Activated CD4-positive, alpha-beta T cell treated with anti-CD3 and anti-CD28 coated beads for 36 hours (primary cell): ENCODE measurements at regions of chr2 and their contacts with region 1.

Region 1: DNA sequence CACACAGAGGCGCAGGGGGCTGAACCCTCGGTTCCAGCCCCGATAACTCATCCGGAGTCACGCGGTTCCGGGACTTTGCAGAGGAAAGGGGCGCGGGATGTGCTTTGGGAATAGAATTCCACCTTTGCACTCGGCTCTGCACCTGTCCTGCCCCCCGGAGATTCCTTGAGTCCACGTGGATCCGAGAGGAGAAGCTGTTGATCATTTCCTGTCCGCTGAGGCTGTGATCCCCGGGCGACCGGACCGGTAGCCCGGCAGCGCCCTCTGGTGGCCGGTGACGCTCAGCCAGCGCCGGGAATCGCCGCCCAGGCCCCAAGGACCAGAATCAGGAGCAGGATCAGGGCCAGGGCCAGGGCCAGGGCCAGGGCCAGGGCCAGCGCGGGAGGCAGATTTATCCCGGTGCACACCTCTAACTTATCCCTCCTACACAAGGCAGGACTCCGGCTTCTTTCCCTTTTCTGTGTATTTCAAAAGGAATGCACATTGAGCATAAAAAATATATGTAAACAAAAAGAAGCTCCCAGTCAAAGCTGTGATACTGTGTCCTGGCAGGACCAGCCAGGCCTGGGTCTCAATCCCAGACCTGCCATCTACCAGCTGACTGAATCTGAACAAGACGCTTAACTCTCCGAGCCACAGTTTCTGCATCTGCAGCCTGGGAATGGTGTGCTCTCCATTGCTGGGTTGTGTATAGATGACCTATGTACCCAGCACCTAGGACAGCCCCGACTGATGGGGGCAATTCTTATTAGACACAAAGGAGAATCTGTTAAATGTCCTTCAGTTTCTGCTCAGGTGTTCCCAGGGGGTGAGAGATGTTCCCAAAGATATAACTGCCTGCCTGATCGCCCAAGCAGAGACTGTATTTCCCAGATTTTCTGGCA is 8.5 kb upstream of the SPATA3 start:
- DNase-seq: peak; percentile 88
- ATAC-seq: peak; percentile 34
- H3K4me3 Mint-ChIP-seq: peak overlapping the region; percentile 67
- H3K27ac Mint-ChIP-seq: no peak overlapping the region
- H3K4me1 Mint-ChIP-seq: peaks cover 36% of the 10 kb centered on the region
- H3K27me3 Mint-ChIP-seq: peaks cover 16% of the 10 kb centered on the region

Region 2: DNA sequence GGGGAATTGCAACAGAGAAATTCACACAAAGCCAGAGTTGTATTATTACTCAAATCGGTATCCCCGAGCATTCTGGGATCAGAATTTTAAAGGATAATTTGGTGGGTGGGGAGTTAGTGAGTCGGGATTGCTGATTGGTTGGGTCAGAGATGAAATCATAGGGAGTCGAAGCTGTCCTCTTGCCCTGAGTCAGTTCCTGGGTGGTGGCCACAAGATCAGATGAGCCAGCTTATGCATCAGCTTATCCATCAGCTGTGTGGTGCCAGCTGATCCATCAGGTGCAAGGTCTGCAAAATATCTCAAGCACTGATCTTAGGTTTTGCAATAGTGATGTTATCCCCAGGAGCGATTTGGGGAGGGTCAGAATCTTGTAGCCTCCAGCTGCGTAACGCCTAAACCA is 157.0 kb before region 1 on chr2:
- CTCF ChIA-PET with region 1: interaction called, 12 read pairs
- POLR2A ChIA-PET with region 1: interaction called, 4 read pairs
- intact Hi-C with region 1: no loop called
- DNase-seq: peak; percentile 58
- ATAC-seq: peak; percentile 64
- H3K4me3 Mint-ChIP-seq: no peak overlapping the region
- H3K27ac Mint-ChIP-seq: no peak overlapping the region
- H3K4me1 Mint-ChIP-seq: no peaks in the 10 kb centered on the region
- H3K27me3 Mint-ChIP-seq: peaks cover 38% of the 10 kb centered on the region

Region 3: GRCh38 chr2:230902180-230902899 is 85.0 kb before region 1 on chr2:
- CTCF ChIA-PET with region 1: interaction called, 186 read pairs
- POLR2A ChIA-PET with region 1: interaction called, 16 read pairs
- intact Hi-C with region 1: loop called (anchors 1 kb)
- DNase-seq: peak; percentile 81
- ATAC-seq: peak; percentile 43
- H3K4me3 Mint-ChIP-seq: no peak overlapping the region
- H3K27ac Mint-ChIP-seq: no peak overlapping the region
- H3K4me1 Mint-ChIP-seq: peaks cover 56% of the 10 kb centered on the region
- H3K27me3 Mint-ChIP-seq: peaks cover 12% of the 10 kb centered on the region

Region 4: GRCh38 chr2:230942920-230943896 is 44.2 kb before region 1 on chr2:
- CTCF ChIA-PET with region 1: interaction called, 4 read pairs
- POLR2A ChIA-PET with region 1: no interaction called
- intact Hi-C with region 1: loop called in 1 of 2 experiments (anchors 1 kb)
- DNase-seq: peak; percentile 78
- ATAC-seq: peak; percentile 78
- H3K4me3 Mint-ChIP-seq: peak overlapping the region; percentile 61
- H3K27ac Mint-ChIP-seq: peak overlapping the region; percentile 75
- H3K4me1 Mint-ChIP-seq: peaks cover 27% of the 10 kb centered on the region
- H3K27me3 Mint-ChIP-seq: peaks cover 4% of the 10 kb centered on the region

Region 5: GRCh38 chr2:230974096-230974913 is 13.1 kb before region 1 on chr2:
- CTCF ChIA-PET with region 1: interaction called, 15 read pairs
- POLR2A ChIA-PET with region 1: interaction called, 6 read pairs
- intact Hi-C with region 1: loop called (anchors 1 kb)
- DNase-seq: peak; percentile 86
- ATAC-seq: peak; percentile 92
- H3K4me3 Mint-ChIP-seq: peak overlapping the region; percentile 26
- H3K27ac Mint-ChIP-seq: peak overlapping the region; percentile 91
- H3K4me1 Mint-ChIP-seq: peaks cover 48% of the 10 kb centered on the region
- H3K27me3 Mint-ChIP-seq: peaks cover 2% of the 10 kb centered on the region

Region 6: GRCh38 chr2:231084565-231084964 is 97.2 kb after region 1 on chr2:
- CTCF ChIA-PET with region 1: no interaction called
- POLR2A ChIA-PET with region 1: no interaction called
- intact Hi-C with region 1: no loop called
- DNase-seq: no peak
- ATAC-seq: no peak
- H3K4me3 Mint-ChIP-seq: no peak overlapping the region
- H3K27ac Mint-ChIP-seq: no peak overlapping the region
- H3K4me1 Mint-ChIP-seq: no peaks in the 10 kb centered on the region
- H3K27me3 Mint-ChIP-seq: no peaks in the 10 kb centered on the region